ENCODE measurements at regions of chr16 and their contacts with region 1.

Region 1: DNA sequence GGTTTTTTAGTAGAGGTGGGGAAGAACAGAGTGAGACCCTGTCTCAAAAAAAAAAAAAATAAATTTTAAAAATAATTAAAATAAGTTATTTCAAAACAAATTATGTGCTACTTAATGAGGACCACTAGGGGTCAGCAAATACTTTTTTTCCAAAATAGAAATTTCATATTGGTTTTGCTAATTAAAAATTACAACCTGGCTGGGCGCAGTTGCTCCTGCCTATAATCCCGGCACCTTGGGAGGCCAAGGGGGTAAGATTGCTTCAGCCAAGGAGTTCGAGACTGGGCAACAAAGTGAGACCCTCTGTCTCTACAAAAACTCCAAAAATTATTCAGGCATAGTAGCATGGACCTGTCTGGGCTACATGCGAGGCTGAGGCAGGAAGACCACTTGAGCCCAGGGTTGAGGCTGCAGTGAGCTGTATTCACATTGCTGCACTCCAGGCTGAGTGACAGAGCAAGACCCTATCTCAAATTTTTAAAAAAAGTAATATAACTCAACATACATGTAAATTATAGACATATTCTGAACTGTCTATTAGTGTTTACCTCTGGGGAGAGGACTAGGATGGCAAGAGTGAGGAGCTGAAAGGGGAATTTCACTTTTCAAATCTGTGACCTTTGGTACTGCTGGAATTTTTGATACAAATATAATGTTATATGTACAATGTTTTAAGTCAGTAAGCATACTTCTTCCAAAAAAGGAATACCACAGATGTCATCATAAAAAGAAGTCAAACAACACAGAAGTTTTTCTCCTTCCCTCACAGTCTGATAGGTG is 8.1 kb downstream of the MEIOB start:
- DNase-seq: no peak
- ATAC-seq: peak; percentile 40
- H3K4me3 Mint-ChIP-seq: no peak overlapping the region
- H3K27ac Mint-ChIP-seq: no peak overlapping the region
- H3K4me1 Mint-ChIP-seq: no peaks in the 10 kb centered on the region
- H3K27me3 Mint-ChIP-seq: peaks cover 23% of the 10 kb centered on the region
- CTCF ChIP-seq: no peak

Region 2: DNA sequence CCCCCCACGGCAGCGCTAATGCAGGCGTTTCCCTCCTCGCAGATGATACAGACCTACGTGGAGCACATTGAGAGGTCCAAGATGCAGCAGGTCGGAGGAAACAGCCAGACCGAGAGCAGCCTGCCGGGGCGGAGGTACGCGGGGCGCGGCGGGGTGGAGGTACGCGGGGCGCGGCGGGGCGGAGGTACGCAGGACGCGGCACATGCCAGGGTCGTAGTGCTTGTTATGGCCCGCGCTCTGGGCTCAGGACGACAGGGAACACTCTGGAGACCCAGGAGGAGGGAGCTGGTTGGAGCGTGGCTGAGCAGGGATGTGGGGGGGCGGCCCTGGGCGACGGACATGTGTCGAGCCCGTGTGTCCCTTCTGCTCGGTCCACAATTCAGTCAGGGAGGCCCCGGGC is 134.4 kb before region 1 on chr16:
- CTCF ChIA-PET with region 1: no interaction called
- POLR2A ChIA-PET with region 1: interaction called, 12 read pairs
- intact Hi-C with region 1: no loop called
- DNase-seq: no peak
- ATAC-seq: no peak
- H3K4me3 Mint-ChIP-seq: no peak overlapping the region
- H3K27ac Mint-ChIP-seq: no peak overlapping the region
- H3K4me1 Mint-ChIP-seq: peaks cover 25% of the 10 kb centered on the region
- H3K27me3 Mint-ChIP-seq: no peaks in the 10 kb centered on the region
- CTCF ChIP-seq: no peak

Region 3: DNA sequence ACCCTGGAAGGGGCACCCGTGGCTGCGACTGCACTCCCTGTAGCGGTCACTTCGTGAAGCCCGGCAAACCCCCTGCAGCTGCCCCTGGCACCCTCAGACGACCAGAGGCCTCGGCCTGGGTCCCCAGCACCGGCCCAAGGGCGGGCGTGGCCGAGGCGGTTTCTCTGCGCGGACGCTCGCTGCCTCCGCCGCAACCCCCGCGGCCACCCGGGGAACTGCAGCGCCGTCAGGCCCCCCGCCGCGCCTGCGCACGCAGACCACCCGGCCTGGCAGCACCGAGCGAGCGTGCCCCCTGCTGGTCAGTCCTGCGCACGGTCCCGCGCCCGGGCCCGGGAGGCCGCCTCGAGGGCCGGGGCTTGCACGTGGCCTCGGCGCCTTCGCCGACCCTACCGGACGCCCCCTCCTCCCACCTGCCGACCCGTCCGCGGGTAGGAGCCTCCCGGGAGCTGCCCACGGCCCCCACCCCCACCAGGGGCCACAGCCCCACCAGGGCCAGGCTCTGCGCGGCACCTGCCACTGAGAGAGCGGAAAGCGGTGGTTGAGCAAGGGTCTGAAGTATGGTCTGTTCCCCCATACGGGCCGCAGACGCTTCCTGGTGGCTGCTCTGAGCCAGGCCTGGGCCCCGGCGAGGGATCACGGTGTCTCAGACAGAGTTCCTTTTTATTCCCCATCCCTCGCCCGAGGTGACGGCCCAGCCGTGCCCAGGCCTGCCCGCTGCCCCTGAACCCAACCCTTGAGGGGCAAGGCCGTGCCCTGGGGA is 65.9 kb after region 1 on chr16:
- CTCF ChIA-PET with region 1: no interaction called
- POLR2A ChIA-PET with region 1: no interaction called
- intact Hi-C with region 1: loop called (anchors 1 kb)
- DNase-seq: peak; percentile 97
- ATAC-seq: peak; percentile 98
- H3K4me3 Mint-ChIP-seq: peak overlapping the region; percentile 64
- H3K27ac Mint-ChIP-seq: no peak overlapping the region
- H3K4me1 Mint-ChIP-seq: peaks cover 2% of the 10 kb centered on the region
- H3K27me3 Mint-ChIP-seq: peaks cover 6% of the 10 kb centered on the region
- CTCF ChIP-seq: peak; percentile 92

Region 4: GRCh38 chr16:2023098-2023925 is 159.4 kb after region 1 on chr16:
- CTCF ChIA-PET with region 1: no interaction called
- POLR2A ChIA-PET with region 1: no interaction called
- intact Hi-C with region 1: loop called (anchors 1 kb)
- DNase-seq: peak; percentile 97
- ATAC-seq: peak; percentile 94
- H3K4me3 Mint-ChIP-seq: peak overlapping the region; percentile 79
- H3K27ac Mint-ChIP-seq: peak overlapping the region; percentile 73
- H3K4me1 Mint-ChIP-seq: peaks cover 24% of the 10 kb centered on the region
- H3K27me3 Mint-ChIP-seq: peaks cover 27% of the 10 kb centered on the region
- CTCF ChIP-seq: peak; percentile 82

Measured in activated B cell treated with CpG ODN at 0.5 μM for 24 hours (primary cell).